Activated CD8-positive, alpha-beta T cell treated with anti-CD3 and anti-CD28 coated beads for 36 hours (primary cell): ENCODE measurements at regions of chr3 and their contacts with region 1.

Region 1: DNA sequence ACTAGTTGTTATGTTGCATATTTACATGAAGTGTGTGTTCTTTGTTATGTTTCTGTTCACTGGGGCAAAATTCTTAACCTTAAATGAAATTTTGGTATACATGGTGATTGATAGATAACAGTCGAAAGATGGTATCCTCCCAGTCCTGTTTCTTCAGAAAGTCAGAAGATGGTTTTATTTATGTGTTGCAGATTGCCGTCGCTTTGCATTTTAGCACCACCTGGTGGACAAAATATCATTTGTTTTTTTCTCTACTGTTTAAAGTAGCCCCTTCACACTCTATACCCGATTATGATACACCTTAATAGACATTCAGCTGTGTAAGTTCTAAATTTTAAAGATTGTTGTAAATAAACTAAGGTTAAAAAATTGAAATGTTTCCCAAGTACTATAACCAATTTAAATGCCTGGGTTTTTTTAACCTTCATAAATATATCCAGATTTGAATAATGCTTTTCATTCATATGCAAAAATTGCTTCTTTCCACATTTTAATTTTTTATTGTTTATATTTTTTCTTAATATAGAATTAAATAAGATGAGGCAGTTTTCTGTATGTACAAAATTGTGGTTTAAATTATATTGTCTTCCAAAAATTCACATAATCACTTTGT is 152.2 kb downstream of the ALCAM start:
- DNase-seq: peak; percentile 37
- ATAC-seq: peak; percentile 69
- H3K4me3 Mint-ChIP-seq: no peak overlapping the region
- H3K27ac Mint-ChIP-seq: no peak overlapping the region
- H3K4me1 Mint-ChIP-seq: peaks cover 3% of the 10 kb centered on the region
- H3K27me3 Mint-ChIP-seq: no peaks in the 10 kb centered on the region
- CTCF ChIP-seq: peak; percentile 82

Region 2: DNA sequence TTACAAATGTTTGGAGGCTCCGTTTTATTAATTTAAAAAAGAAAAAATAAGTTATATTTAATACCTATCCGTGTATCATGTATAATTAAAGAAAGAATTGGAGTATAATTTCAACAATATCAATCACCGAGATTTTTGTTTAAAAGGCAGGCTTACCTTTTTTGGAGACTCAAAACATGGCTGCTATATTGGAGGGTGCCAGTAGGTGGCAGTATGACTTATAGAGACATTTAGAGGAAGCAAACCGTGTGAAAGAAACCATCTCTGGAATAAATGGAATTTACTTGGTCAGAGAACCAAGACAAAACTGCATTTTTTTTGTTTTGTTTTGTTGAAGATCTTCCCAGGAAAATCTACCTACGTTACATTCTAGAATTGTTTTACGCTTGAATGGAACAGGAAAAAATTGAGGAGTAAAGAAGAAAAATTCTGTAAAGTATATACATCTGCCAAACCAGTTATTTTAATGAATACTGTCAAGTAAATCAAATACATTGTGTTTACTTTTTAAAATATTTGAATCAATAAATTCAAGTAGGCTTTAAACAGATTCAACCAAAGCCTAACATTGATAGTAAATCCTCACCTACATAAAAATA is 954.8 kb before region 1 on chr3:
- CTCF ChIA-PET with region 1: no interaction called
- POLR2A ChIA-PET with region 1: no interaction called
- intact Hi-C with region 1: loop called (anchors 10 kb)
- DNase-seq: peak; percentile 83
- ATAC-seq: peak; percentile 42
- H3K4me3 Mint-ChIP-seq: no peak overlapping the region
- H3K27ac Mint-ChIP-seq: no peak overlapping the region
- H3K4me1 Mint-ChIP-seq: no peaks in the 10 kb centered on the region
- H3K27me3 Mint-ChIP-seq: peaks cover 7% of the 10 kb centered on the region
- CTCF ChIP-seq: peak; percentile 76

Region 3: DNA sequence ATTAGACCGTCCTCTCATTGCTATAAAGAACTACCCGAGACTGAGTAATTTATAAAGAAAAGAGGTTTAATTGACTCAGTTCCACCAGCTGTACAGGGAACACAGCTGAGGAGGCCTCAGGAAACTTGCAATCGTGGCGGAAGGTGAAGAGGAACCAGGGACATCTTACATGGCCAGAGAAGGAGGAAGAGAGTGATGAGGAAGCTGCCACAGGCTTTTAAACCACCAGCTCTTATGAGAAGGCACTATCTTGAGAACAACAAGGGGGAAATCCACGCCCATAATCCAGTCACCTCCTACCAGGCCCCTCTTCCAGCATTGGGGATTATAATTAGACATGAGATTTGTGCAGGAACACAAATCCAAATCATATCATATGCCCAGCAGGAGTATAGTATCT is 13.7 kb before region 1 on chr3:
- CTCF ChIA-PET with region 1: interaction called, 33 read pairs
- POLR2A ChIA-PET with region 1: no interaction called
- intact Hi-C with region 1: no loop called
- DNase-seq: no peak
- ATAC-seq: no peak
- H3K4me3 Mint-ChIP-seq: no peak overlapping the region
- H3K27ac Mint-ChIP-seq: no peak overlapping the region
- H3K4me1 Mint-ChIP-seq: no peaks in the 10 kb centered on the region
- H3K27me3 Mint-ChIP-seq: no peaks in the 10 kb centered on the region
- CTCF ChIP-seq: no peak